ENCODE measurements at regions of chr1 and their contacts with region 1.

Region 1: GRCh38 chr1:222455188-222455879 is 92.6 kb downstream of the HHIPL2 start:
- DNase-seq: peak; percentile 89 to 97
- H3K4me3 ChIP-seq: no peak overlapping the region
- CTCF ChIP-seq: peak in 1 of 3 donors; percentile 81
- POLR2A ChIP-seq: no peak

Region 2: GRCh38 chr1:221487781-221488524 is 967.4 kb before region 1 on chr1:
- intact Hi-C with region 1: loop called (anchors 10 kb)
- DNase-seq: no peak
- H3K4me3 ChIP-seq: no peak overlapping the region
- CTCF ChIP-seq: no peak
- POLR2A ChIP-seq: no peak

Region 3: GRCh38 chr1:222216255-222216754 is 239.0 kb before region 1 on chr1:
- intact Hi-C with region 1: no loop called
- DNase-seq: no peak
- H3K4me3 ChIP-seq: no peak overlapping the region
- CTCF ChIP-seq: no peak
- POLR2A ChIP-seq: no peak